ENCODE measurements at regions of chr13 and their contacts with region 1.

Region 1: DNA sequence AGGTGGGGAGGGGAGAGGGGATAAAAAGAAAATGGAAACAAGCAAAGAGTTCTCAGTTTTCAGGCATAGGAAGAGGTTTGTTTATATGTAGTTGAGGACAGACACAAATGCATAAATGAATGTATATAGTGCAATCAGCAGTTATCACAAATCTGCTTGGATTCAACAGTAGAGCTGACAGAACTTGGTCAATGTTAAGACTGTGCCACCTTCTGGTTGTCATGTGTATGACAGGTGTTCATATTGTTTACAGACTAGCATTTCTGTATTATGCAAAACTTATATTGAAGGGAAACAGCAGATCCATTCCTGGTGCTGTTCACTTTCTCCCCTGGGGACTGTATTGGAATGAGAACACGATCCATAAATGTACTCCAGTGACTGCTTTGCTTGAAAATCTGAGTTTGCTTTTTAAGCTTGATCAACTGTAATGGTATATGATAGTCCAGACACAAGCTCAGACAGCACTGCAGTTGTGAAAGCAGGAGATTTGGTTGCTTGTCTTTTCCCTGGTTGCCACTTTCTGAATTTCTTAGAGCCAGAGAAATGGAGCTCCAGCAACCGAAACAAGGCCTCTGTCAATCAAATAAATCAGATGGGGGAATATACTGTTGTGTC is 319.5 kb upstream of the OBI1 start:
- DNase-seq: peak in 3 of 6 donors; percentile 9 to 45 (median 17)
- ATAC-seq: peak; percentile 40 to 89 (median 86)
- H3K4me3 ChIP-seq: no peak overlapping the region
- H3K27ac ChIP-seq: no peak overlapping the region
- H3K4me1 ChIP-seq: no peaks in the 10 kb centered on the region
- H3K27me3 ChIP-seq: no peaks in the 10 kb centered on the region
- CTCF ChIP-seq: peak in 3 of 4 donors; percentile 59 to 64 (median 63)

Region 2: DNA sequence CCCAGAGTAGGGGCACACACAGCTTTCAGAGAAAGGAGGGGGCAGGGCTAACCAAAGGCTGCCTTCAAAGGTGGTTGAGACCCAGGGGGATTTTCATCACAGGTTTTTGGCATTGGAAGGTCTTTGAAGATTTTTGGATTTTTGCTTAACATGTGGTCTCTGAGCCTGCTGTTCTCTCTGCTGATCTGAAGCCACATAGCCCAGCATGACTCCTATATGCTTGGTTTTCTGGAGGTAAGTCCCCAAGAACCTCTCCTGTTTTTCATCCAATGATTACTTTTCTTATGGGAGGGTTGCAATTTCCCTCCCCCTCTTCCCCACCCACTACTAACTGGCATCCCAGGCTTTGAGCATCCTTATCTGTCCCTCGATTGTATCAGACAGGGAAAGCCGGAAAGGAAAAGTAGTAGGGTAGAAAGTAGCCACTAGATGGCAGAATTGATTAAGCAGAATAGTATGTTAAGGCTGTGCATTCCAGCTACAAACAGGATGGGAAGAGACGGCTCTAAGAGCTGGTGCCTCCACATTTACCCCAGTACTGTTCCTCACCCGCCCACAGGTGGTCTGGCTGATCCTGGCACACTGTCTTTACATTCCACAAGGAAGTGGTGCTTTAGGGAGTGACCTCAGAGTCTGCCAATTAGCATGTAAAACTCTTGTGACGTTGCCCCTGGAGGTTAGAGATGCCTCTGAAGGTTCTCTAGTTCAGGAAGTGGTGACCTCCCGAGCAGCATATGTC is 840.9 kb before region 1 on chr13:
- intact Hi-C with region 1: loop called in 2 of 3 experiments (anchors 5 kb)
- DNase-seq: peak in 2 of 6 donors; percentile 15 to 20
- ATAC-seq: peak; percentile 66 to 95 (median 92)
- H3K4me3 ChIP-seq: no peak overlapping the region
- H3K27ac ChIP-seq: no peak overlapping the region
- H3K4me1 ChIP-seq: no peaks in the 10 kb centered on the region
- H3K27me3 ChIP-seq: no peaks in the 10 kb centered on the region
- CTCF ChIP-seq: peak; percentile 38 to 61 (median 54)